Esophagus squamous epithelium (tissue), 5 donors: ENCODE measurements at regions of chr19 and their contacts with region 1.

Region 1: GRCh38 chr19:13277104-13277809 is 127.0 kb downstream of the IER2 start:
- DNase-seq: no peak
- H3K4me3 ChIP-seq: no peak overlapping the region
- H3K27ac ChIP-seq: no peak overlapping the region
- H3K4me1 ChIP-seq: peaks cover 0 to 8% (median 0%) of the 10 kb centered on the region in 3 donors
- H3K27me3 ChIP-seq: peaks cover 0 to 24% (median 0%) of the 10 kb centered on the region in 4 donors
- CTCF ChIP-seq: peak; percentile 66 to 86 (median 79)
- POLR2A ChIP-seq: no peak

Region 2: GRCh38 chr19:13430790-13431582 is 153.7 kb after region 1 on chr19:
- intact Hi-C with region 1: loop called (anchors 5 kb)
- DNase-seq: no peak
- H3K4me3 ChIP-seq: no peak overlapping the region
- H3K27ac ChIP-seq: no peak overlapping the region
- H3K4me1 ChIP-seq: no peaks in the 10 kb centered on the region
- H3K27me3 ChIP-seq: peaks cover 0 to 17% (median 0%) of the 10 kb centered on the region in 4 donors
- CTCF ChIP-seq: peak in 5 of 6 experiments; percentile 49 to 84 (median 70)
- POLR2A ChIP-seq: no peak

Region 3: DNA sequence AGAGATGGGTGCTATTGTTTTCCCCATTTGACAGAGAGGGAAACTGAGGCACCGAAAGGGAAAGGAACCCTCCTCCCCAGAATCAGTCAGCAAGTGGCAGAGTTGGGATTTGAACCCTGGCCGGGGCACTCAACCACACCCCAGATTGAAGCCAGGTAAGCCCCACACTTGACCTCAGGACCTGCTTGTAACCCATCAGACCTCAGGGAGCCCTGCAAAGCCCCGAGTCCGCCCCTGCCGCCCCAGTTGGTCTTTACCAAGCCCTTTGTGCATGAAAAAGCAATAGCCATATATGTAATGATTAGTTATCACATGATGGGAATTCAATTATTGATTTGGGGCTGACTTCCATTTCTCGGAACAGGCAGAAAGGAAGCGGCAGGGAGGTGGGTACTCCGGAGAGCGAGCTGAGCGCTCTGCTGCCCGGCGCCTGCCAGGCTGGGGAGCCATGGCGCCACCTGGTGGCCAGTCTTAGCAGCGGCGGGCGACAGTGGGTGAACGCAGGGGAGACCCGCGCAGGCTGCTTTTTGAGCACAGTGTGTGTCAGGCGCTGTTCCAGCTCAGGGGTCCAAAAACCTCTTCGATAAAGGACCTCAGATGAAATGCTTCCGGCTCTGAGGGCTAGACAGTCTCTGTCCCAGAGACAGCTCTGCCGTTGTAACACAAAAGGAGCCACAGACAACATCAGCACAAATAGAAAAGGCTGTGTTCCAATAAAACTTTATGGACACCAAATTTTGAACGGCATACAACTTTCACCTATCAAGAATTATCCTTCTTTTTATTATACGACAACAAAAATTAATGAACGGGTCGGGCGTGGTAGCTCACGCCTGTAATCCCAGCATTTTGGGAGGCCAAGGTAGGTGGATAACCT is 311.9 kb after region 1 on chr19:
- intact Hi-C with region 1: loop called (anchors 5 kb)
- DNase-seq: no peak
- H3K4me3 ChIP-seq: no peak overlapping the region
- H3K27ac ChIP-seq: no peak overlapping the region
- H3K4me1 ChIP-seq: peaks cover 0 to 5% (median 0%) of the 10 kb centered on the region in 3 donors
- H3K27me3 ChIP-seq: peaks cover 0 to 48% (median 0%) of the 10 kb centered on the region in 4 donors
- CTCF ChIP-seq: peak; percentile 88 to 99 (median 93)
- POLR2A ChIP-seq: no peak